ENCODE measurements at regions of chr1 and their contacts with region 1.

Region 1: DNA sequence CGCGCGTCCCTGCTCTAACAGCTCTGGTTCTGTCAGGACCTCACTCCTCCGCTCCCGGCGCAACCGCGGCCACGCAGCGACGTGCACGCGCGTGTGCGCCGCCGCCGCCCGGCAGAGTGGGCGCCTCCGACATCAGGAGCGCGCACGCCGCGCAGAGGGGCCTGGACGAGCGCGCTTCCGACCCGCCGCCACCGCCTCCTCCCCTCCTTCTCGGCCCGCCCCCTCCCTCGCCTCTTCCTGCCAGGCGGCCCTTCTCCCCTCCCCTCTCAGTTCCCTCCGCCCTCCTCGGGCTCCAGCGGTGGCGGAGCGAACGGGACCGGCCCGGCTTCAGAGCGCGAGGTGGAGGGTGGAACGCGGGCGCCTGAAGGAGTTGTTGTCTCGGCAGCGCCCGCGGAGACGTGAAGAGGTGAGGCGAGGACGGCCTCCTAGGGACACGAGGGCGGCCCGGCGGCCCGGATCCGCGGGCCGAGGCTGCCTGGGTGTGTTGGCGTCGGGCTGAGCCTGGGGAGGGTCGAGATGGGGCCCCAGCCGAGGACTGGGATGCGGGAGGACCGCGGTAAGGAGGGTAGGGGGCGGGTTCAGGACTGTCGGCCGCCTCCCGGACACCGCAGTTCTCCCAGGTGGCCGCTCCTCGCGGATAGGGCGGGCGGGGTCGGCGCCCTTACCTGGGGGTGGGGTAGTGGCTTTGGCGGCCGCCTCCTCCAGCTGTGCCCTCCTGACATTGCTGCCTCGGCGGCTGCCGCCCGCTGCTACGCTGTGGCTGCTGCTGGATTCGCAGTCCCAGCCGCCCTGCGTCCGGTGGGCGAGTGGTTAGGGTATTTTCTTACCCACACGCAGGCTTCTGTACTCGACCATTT is at the start of gene RABGAP1L:
- DNase-seq: peak; percentile 97 to 99 (median 98)
- ATAC-seq: peak; percentile 91
- H3K4me3 ChIP-seq: peak within 1 kb of the TSS; percentile 78
- H3K27ac ChIP-seq: peak within 1 kb of the TSS; percentile 92
- H3K4me1 ChIP-seq: peaks cover 26 to 50% of the 10 kb centered on the region in 2 experiments
- H3K27me3 ChIP-seq: no peaks in the 10 kb centered on the region
- CTCF ChIP-seq: peak in 2 of 3 experiments; percentile 3 to 9; a peak in 1 of 6 replicates
- EP300 ChIP-seq: no peak; the same call in 1 of the 2 replicates
- POLR2A ChIP-seq: peak; percentile 96
- RAD21 ChIP-seq: 0 out of 4 replicates have a peak, but pooled peaks of 1 of the 2 experiments have one; percentile 11
- polyA plus RNA-seq, gene RABGAP1L: 16.5 to 19.0 TPM

Region 2: DNA sequence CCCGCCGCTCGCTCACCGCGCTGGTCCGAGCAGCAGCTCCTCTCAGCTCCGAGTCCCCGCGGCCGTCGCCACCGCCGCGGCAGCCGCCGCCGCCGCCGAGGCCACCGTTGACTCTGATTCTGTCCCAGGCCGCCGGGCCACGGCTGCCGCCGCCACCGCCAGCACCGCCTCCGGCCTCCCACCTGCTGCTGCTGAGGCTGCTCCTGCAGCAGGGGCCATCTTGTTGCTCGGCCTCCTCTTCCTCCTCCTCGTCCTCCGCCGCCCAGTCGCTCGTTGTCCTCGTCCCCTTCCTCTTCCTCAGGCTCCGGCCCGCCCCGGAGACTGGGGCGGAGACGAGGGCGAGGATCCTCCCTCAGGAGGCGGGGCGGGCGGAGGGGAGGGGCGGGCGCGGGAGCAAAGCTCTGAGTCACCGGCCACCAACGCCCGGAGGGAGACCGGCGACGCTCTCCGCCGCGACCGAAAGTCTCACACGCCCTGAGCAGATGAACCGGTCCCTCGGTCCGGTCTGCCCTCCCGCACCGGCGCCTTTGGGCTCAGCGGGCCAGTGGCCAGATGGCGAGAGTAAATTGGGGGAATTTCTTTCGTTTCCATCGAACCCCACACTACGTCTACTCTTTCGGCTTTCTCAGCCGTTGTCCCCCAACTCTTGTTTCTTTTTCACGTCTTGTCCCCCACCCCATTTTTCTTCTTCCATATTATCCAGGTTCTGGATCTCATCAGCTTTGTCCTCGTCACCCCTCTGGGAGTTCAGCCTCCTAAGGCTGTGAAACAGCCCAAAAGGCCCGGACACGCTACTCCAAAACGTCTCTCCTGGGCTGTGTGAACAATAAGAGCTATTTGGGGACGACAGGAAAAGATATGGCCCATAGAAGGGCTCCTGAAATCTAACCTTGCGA is 137.2 kb before region 1 on chr1 and contains the start of gene RC3H1:
- CTCF ChIA-PET with region 1: no interaction called
- POLR2A ChIA-PET with region 1: interaction called, 3 read pairs
- in situ Hi-C with region 1: no loop called
- intact Hi-C with region 1: loop called (anchors 5 kb)
- DNase-seq: peak; percentile 95 to 96 (median 96)
- ATAC-seq: peak; percentile 89
- H3K4me3 ChIP-seq: peak within 1 kb of the TSS; percentile 88
- H3K27ac ChIP-seq: peak within 1 kb of the TSS; percentile 88
- H3K4me1 ChIP-seq: peaks cover 12 to 19% of the 10 kb centered on the region in 2 experiments; a peak in 3 of 5 replicates
- H3K27me3 ChIP-seq: no peaks in the 10 kb centered on the region
- CTCF ChIP-seq: no peak
- EP300 ChIP-seq: 0 out of 2 replicates have a peak, but pooled peaks have one; percentile 24
- POLR2A ChIP-seq: peak; percentile 98
- RAD21 ChIP-seq: no peak
- polyA plus RNA-seq, gene RC3H1: 2.4 to 3.4 TPM

Region 3: GRCh38 chr1:174103766-174104165 is 55.7 kb before region 1 on chr1:
- CTCF ChIA-PET with region 1: interaction called, 3 read pairs
- POLR2A ChIA-PET with region 1: interaction called, 4 read pairs
- in situ Hi-C with region 1: no loop called
- intact Hi-C with region 1: loop called (anchors 5 kb)
- DNase-seq: no peak
- ATAC-seq: peak; percentile 20; the same call in 2 of the 3 replicates
- H3K4me3 ChIP-seq: no peak overlapping the region
- H3K27ac ChIP-seq: no peak overlapping the region
- H3K4me1 ChIP-seq: no peaks in the 10 kb centered on the region; a peak in 1 of 5 replicates
- H3K27me3 ChIP-seq: peaks cover 9 to 12% of the 10 kb centered on the region in 2 experiments; a peak in 3 of 5 replicates
- CTCF ChIP-seq: no peak
- EP300 ChIP-seq: no peak
- POLR2A ChIP-seq: no peak
- RAD21 ChIP-seq: no peak

Region 4: DNA sequence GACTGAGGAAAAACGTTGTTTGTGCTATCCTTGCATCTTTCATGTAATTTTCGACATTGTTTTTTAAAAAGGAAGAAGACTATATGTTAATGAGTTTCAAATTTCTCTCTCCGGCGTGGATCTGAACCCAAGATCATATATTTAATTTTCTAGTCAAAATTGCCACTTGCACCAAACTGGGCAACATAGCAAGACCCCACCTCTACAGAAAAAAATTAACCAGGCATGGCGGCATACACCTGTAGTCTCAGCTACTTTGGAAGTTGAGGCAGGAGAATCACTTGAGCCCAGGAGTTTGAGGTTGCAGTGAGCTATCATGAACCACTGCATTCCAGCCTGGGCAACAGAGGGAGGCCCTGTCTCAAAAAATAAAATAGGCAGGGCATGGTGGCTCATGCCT is 16.6 kb before region 1 on chr1:
- CTCF ChIA-PET with region 1: no interaction called
- POLR2A ChIA-PET with region 1: interaction called, 5 read pairs
- in situ Hi-C with region 1: no loop called
- intact Hi-C with region 1: loop called (anchors 2 kb)
- DNase-seq: no peak
- ATAC-seq: no peak
- H3K4me3 ChIP-seq: no peak overlapping the region
- H3K27ac ChIP-seq: no peak overlapping the region
- H3K4me1 ChIP-seq: no peaks in the 10 kb centered on the region; a peak in 1 of 5 replicates
- H3K27me3 ChIP-seq: peaks cover 0 to 4% of the 10 kb centered on the region in 2 experiments; a peak in 2 of 5 replicates
- CTCF ChIP-seq: no peak
- EP300 ChIP-seq: no peak
- POLR2A ChIP-seq: no peak
- RAD21 ChIP-seq: no peak

Region 5: DNA sequence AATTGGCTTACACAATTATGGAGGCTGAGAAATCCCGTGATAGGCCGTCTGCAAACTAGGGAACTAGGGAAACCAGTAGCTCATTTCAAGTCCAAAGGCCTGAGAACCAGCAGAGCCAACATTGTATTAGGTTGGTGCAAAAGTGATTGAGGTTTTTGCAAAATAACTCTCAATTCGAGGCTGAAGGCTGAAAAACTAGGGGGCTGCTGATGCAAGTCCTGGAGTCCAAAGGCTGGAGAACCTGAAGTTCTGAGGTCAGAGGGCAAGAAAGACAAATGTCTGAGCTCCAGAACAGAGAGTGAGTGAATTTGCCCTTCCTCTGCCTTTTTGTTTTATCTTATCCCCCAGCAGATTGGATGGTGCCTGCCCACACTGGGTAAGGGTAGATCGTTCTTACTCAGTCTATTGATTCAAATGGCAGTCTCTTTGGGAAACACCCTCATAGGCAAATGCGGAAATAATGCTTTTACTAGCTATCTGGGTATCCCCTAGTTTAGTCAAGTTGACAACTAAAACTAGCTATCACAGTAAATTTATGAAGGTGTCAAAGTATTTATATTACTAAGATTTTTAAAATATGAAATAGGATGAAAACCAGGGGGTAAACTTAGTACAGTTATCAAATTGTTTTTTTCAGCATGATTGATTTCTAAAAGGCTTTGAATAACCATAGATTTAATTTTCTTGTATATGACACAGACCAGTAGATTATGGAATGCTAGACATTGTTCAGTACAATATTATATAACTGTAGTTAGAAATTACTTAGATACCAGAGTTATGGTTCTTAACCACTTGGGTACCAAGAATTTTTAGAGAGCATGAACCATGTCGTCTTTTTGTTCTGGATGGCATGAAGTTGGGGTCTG is 15.2 kb after region 1 on chr1:
- CTCF ChIA-PET with region 1: no interaction called
- POLR2A ChIA-PET with region 1: interaction called, 17 read pairs
- in situ Hi-C with region 1: no loop called
- intact Hi-C with region 1: no loop called
- DNase-seq: no peak
- ATAC-seq: peak; percentile 14; the same call in 1 of the 3 replicates
- H3K4me3 ChIP-seq: no peak overlapping the region
- H3K27ac ChIP-seq: no peak overlapping the region
- H3K4me1 ChIP-seq: peaks cover 0 to 8% of the 10 kb centered on the region in 2 experiments; a peak in 3 of 5 replicates
- H3K27me3 ChIP-seq: no peaks in the 10 kb centered on the region
- CTCF ChIP-seq: no peak
- EP300 ChIP-seq: no peak
- POLR2A ChIP-seq: no peak
- RAD21 ChIP-seq: no peak

Region 6: DNA sequence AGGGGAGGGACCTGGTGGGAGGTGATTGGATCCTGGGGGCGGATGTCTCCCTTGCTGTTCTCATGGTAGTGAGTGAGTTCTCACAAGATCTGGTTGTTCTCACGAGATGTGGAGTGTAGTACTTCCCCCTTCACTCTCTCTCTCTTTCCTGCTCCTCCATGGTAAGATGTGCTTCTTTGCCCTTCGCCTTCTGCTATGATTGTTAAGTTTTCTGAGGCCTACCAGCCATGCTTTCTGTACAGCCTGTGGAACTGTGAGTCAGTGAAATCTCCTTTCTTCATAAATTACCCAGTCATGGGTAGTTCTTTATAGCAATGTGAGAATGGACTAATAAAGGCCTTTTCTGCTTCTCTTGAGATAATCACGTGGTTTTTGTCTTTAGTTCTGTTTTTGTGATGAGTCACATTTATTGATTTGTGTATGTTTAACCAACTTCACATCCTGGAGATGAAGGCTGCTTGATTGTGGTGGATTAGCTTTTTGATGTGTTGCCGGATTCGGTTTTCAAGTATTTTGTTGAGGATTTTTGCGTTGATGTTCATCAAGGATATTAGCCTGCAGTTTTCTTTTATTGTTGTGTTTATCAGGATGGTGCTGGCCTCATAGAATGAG is 45.3 kb after region 1 on chr1:
- CTCF ChIA-PET with region 1: no interaction called
- POLR2A ChIA-PET with region 1: interaction called, 11 read pairs
- in situ Hi-C with region 1: no loop called
- intact Hi-C with region 1: loop called (anchors 2 kb)
- DNase-seq: peak in 2 of 4 experiments; percentile 46 to 83
- ATAC-seq: peak; percentile 98
- H3K4me3 ChIP-seq: peak overlapping the region; percentile 17
- H3K27ac ChIP-seq: peak overlapping the region; percentile 79
- H3K4me1 ChIP-seq: peaks cover 4 to 19% of the 10 kb centered on the region in 2 experiments; a peak in 2 of 5 replicates
- H3K27me3 ChIP-seq: no peaks in the 10 kb centered on the region
- CTCF ChIP-seq: no peak
- EP300 ChIP-seq: no peak
- POLR2A ChIP-seq: peak; percentile 77
- RAD21 ChIP-seq: no peak

Region 7: DNA sequence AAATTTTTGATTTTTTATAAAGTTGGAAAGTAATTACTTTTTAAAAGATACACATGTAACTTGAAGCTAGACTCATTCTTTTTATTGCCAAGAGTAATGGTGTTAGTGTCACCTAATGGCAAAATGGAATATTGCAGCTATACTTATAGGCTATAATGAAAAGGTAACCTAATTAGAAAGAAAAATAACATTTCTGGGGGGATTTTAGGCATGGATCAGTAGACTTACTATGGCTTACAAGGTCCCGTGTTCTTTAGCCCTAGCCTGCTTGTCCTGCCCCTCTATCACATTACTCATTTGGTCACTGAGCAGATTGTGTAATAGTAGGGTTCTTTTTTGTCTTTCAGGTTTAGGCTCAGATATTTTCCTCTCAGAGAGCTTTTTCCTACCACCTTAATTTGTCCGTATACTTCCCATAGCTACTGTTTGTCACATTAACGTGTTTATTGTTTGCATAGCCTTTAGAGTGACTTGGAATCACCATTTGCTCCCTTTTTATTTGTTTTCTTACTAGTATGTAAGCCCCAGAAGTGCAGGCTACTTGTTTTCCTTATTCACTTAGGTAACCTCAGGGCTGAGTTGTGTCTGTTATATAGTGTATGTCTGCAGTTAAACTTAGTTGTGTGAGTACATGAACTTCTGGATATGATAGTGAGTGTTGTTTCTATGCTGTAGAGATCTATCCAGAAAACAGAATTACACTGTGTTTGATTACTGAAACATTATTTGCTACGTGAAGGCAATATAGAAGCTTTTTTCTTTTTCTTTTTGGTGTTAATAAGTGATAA is 58.5 kb after region 1 on chr1:
- CTCF ChIA-PET with region 1: no interaction called
- POLR2A ChIA-PET with region 1: interaction called, 3 read pairs
- in situ Hi-C with region 1: no loop called
- intact Hi-C with region 1: loop called (anchors 1 kb)
- DNase-seq: peak in 2 of 4 experiments; percentile 31 to 59
- ATAC-seq: peak; percentile 90
- H3K4me3 ChIP-seq: no peak overlapping the region
- H3K27ac ChIP-seq: no peak overlapping the region
- H3K4me1 ChIP-seq: peaks cover 0 to 3% of the 10 kb centered on the region in 2 experiments; a peak in 2 of 5 replicates
- H3K27me3 ChIP-seq: no peaks in the 10 kb centered on the region
- CTCF ChIP-seq: peak; percentile 58 to 95 (median 70)
- EP300 ChIP-seq: no peak
- POLR2A ChIP-seq: no peak
- RAD21 ChIP-seq: peak; percentile 89 to 93

Measured in K562 (cell line).